ENCODE measurements at regions of chr12 and their contacts with region 1.

Region 1: GRCh38 chr12:56041552-56042429 is at the start of gene RPS26:
- DNase-seq: peak; percentile 95 to 98
- H3K4me3 ChIP-seq: peak within 1 kb of the TSS; percentile 79
- H3K4me3 Mint-ChIP-seq: peak within 1 kb of the TSS; percentile 94
- H3K27ac Mint-ChIP-seq: peak within 1 kb of the TSS; percentile 97
- H3K4me1 ChIP-seq: peaks cover 10% of the 10 kb centered on the region
- H3K4me1 Mint-ChIP-seq: peaks cover 17% of the 10 kb centered on the region
- H3K27me3 ChIP-seq: no peaks in the 10 kb centered on the region
- H3K27me3 Mint-ChIP-seq: no peaks in the 10 kb centered on the region
- CTCF ChIP-seq: peak in 1 of 2 experiments; percentile 79
- total RNA-seq, gene RPS26: 50.2 and 60.4 TPM in 2 replicates

Region 2: GRCh38 chr12:55681142-55682077 is 360.4 kb before region 1 on chr12:
- CTCF ChIA-PET with region 1: no interaction called
- POLR2A ChIA-PET with region 1: no interaction called
- intact Hi-C with region 1: no loop called
- DNase-seq: peak; percentile 86
- H3K4me3 ChIP-seq: peak overlapping the region; percentile 59
- H3K4me3 Mint-ChIP-seq: peak overlapping the region; percentile 96
- H3K27ac Mint-ChIP-seq: peak overlapping the region; percentile 84
- H3K4me1 ChIP-seq: peaks cover 4% of the 10 kb centered on the region; the same call in 1 of the 2 replicates
- H3K4me1 Mint-ChIP-seq: peaks cover 8% of the 10 kb centered on the region
- H3K27me3 ChIP-seq: no peaks in the 10 kb centered on the region
- H3K27me3 Mint-ChIP-seq: no peaks in the 10 kb centered on the region
- CTCF ChIP-seq: peak; percentile 58 to 82

Region 3: GRCh38 chr12:55817346-55818139 is 224.2 kb before region 1 on chr12 and contains the starts of genes ORMDL2 and SARNP:
- CTCF ChIA-PET with region 1: no interaction called
- POLR2A ChIA-PET with region 1: interaction called, 3 read pairs
- intact Hi-C with region 1: loop called (anchors 5 kb)
- DNase-seq: peak; percentile 97 to 99
- H3K4me3 ChIP-seq: peak within 1 kb of the TSS; percentile 83
- H3K4me3 Mint-ChIP-seq: no peak within 1 kb of the TSS
- H3K27ac Mint-ChIP-seq: no peak within 1 kb of the TSS
- H3K4me1 ChIP-seq: peaks cover 7% of the 10 kb centered on the region; the same call in 1 of the 2 replicates
- H3K4me1 Mint-ChIP-seq: peaks cover 30% of the 10 kb centered on the region
- H3K27me3 ChIP-seq: no peaks in the 10 kb centered on the region
- H3K27me3 Mint-ChIP-seq: no peaks in the 10 kb centered on the region
- CTCF ChIP-seq: no peak
- total RNA-seq, gene ORMDL2: 44.0 and 48.3 TPM in 2 replicates
- total RNA-seq, gene SARNP: 70.9 and 77.6 TPM in 2 replicates

Region 4: GRCh38 chr12:55926738-55927587 is 114.8 kb before region 1 on chr12:
- CTCF ChIA-PET with region 1: no interaction called
- POLR2A ChIA-PET with region 1: no interaction called
- intact Hi-C with region 1: loop called (anchors 1 kb)
- DNase-seq: peak; percentile 89 to 95
- H3K4me3 ChIP-seq: peak overlapping the region; percentile 74
- H3K4me3 Mint-ChIP-seq: peak overlapping the region; percentile 98
- H3K27ac Mint-ChIP-seq: peak overlapping the region; percentile 97
- H3K4me1 ChIP-seq: peaks cover 19% of the 10 kb centered on the region
- H3K4me1 Mint-ChIP-seq: peaks cover 35% of the 10 kb centered on the region
- H3K27me3 ChIP-seq: no peaks in the 10 kb centered on the region
- H3K27me3 Mint-ChIP-seq: no peaks in the 10 kb centered on the region
- CTCF ChIP-seq: peak; percentile 79 to 86

Region 5: DNA sequence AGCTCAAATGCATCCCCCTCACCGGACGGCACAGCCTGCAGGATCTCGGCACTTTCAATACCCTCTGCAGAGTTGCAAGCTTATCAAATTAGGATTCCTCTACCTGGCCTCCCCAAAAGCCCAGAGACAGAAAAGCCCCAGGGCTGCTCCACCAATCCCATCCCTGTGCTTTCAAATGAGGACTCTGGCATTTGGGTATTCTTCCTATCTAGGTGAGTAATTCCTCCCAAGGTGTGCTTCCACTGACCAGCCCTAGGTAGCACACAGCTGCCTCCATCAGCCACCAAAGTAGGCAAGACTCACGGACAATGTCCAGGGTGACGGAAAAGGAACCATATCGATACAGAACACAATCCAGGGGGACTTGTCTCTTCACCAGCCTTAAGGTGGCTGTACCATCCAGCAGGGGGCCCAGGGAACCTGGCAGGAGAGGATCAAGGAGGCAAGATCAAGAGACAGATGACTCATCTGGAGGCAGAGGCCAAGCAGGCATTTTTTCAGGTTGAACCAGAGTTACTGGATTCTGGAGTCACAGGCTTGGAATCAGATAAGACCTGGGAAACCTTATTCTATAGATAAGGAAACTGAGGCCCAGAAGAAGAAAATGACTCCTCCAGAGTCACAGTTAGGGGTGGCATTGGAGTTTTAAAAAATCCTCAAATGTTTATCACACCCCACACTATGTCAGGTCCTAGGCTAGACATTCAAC is 85.8 kb before region 1 on chr12:
- CTCF ChIA-PET with region 1: no interaction called
- POLR2A ChIA-PET with region 1: interaction called, 3 read pairs
- intact Hi-C with region 1: loop called (anchors 1 kb)
- DNase-seq: peak; percentile 90 to 91
- H3K4me3 ChIP-seq: no peak overlapping the region
- H3K4me3 Mint-ChIP-seq: peak overlapping the region; percentile 60
- H3K27ac Mint-ChIP-seq: peak overlapping the region; percentile 93
- H3K4me1 ChIP-seq: peaks cover 44% of the 10 kb centered on the region
- H3K4me1 Mint-ChIP-seq: peaks cover 41% of the 10 kb centered on the region
- H3K27me3 ChIP-seq: no peaks in the 10 kb centered on the region
- H3K27me3 Mint-ChIP-seq: no peaks in the 10 kb centered on the region
- CTCF ChIP-seq: peak; percentile 69 to 74

Region 6: DNA sequence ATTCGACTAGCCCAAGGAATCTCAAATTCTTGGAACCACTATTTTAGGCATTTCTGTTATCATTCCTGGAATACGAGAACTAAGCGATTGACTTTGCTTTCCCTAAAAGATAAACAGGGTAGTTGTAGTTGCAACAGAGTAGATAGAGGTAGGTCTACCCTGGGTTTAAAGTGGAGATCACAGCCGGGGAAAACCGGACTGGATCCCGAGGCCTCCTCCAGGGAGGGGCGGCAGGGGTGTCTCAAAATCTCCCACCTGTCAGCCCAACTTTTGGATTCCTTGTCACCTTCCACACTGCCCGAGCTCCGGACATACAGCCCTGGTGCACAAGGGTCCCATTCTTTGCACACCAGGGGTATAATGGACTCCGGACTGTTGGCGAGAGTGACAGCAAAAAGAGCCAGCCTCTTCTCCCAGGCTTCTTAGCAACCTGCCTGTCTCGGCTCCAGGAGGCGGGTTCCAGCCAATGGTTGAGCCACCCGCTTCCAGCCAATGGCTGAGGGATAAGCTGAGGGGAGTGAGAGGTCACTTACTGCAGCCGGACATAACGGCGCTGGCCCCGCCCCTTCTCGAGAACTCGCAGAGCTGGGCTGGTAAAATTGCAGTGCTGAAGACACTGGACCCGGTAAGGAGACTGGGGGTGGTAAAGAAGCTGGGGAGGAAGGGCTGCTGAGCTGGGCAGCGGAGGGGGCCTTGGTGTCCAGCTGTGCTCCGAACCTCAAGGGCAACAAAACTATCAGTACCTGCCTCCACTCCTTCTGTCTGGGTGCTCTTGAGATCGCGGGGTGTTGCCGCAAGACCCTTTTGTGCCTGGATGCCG is 44.9 kb before region 1 on chr12 and contains the start of gene SUOX:
- CTCF ChIA-PET with region 1: interaction called, 15 read pairs
- POLR2A ChIA-PET with region 1: interaction called, 7 read pairs
- intact Hi-C with region 1: loop called (anchors 1 kb)
- DNase-seq: peak; percentile 97 to 98
- H3K4me3 ChIP-seq: peak within 1 kb of the TSS; percentile 58
- H3K4me3 Mint-ChIP-seq: peak within 1 kb of the TSS; percentile 98
- H3K27ac Mint-ChIP-seq: peak within 1 kb of the TSS; percentile 87
- H3K4me1 ChIP-seq: peaks cover 9% of the 10 kb centered on the region
- H3K4me1 Mint-ChIP-seq: peaks cover 15% of the 10 kb centered on the region
- H3K27me3 ChIP-seq: no peaks in the 10 kb centered on the region
- H3K27me3 Mint-ChIP-seq: no peaks in the 10 kb centered on the region
- CTCF ChIP-seq: no peak
- total RNA-seq, gene SUOX: 37.9 and 40.8 TPM in 2 replicates

Region 7: GRCh38 chr12:56007564-56008559 is 33.9 kb before region 1 on chr12:
- CTCF ChIA-PET with region 1: no interaction called
- POLR2A ChIA-PET with region 1: interaction called, 6 read pairs
- intact Hi-C with region 1: loop called (anchors 1 kb)
- DNase-seq: peak; percentile 75 to 81
- H3K4me3 ChIP-seq: peak overlapping the region; percentile 52
- H3K4me3 Mint-ChIP-seq: peak overlapping the region; percentile 93
- H3K27ac Mint-ChIP-seq: peak overlapping the region; percentile 82
- H3K4me1 ChIP-seq: peaks cover 54% of the 10 kb centered on the region
- H3K4me1 Mint-ChIP-seq: peaks cover 59% of the 10 kb centered on the region
- H3K27me3 ChIP-seq: no peaks in the 10 kb centered on the region
- H3K27me3 Mint-ChIP-seq: no peaks in the 10 kb centered on the region
- CTCF ChIP-seq: no peak

Region 8: GRCh38 chr12:56104109-56104814 is 62.5 kb after region 1 on chr12 and contains the start of gene PA2G4:
- CTCF ChIA-PET with region 1: no interaction called
- POLR2A ChIA-PET with region 1: interaction called, 4 read pairs
- intact Hi-C with region 1: loop called (anchors 1 kb)
- DNase-seq: peak; percentile 99
- H3K4me3 ChIP-seq: peak within 1 kb of the TSS; percentile 68
- H3K4me3 Mint-ChIP-seq: peak within 1 kb of the TSS; percentile 98
- H3K27ac Mint-ChIP-seq: peak within 1 kb of the TSS; percentile 99
- H3K4me1 ChIP-seq: peaks cover 22% of the 10 kb centered on the region
- H3K4me1 Mint-ChIP-seq: peaks cover 9% of the 10 kb centered on the region
- H3K27me3 ChIP-seq: no peaks in the 10 kb centered on the region; the same call in 1 of the 2 replicates
- H3K27me3 Mint-ChIP-seq: no peaks in the 10 kb centered on the region
- CTCF ChIP-seq: no peak
- total RNA-seq, gene PA2G4: 178 and 190 TPM in 2 replicates